Activated B cell treated with CpG ODN at 0.5 μM for 24 hours (primary cell): ENCODE measurements at regions of chr17 and their contacts with region 1.

Region 1: DNA sequence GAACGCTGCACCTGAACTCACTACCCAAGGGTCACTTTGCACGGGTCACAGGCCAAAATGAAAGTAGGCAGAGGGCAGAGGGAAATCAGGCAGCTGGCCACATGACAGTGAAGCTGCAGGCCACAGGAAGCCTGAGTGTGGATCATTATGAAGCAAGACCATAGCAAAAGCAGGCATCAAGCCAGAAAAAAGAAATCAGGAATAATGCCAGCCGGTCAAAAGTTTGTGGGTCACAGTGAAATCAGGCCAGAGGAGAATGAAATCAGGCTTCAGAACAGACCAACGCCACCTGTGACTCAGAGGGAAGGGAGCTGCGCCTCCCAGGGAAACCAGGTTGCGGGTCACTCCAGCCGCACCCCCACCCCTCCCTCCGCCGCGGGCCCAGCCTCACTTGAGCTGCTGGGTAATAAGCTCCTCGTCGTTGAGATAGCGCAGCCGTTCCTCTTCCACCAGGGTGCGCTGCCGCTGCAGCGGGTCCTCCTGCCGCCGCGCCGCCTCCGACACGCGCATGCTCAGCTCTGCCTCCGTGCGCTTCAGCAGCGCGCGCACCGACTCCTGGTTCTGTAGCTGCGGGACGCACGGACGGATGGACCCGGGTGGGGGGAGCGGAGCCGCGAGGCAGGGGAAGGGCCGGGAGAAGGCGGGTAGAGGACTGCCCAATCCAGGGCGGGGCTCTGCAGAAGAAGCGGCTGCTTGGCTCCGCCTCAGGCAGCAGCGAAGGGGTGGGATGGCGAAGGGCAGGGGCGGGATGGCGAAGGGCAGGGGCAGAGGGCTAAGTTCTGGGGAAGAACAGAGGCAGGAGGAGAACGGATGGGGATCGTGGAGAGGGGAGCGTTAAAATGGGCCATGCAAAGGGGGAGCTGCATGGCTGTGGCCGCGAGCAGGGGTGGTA is 47.7 kb downstream of the SRCIN1 start:
- DNase-seq: peak; percentile 86
- ATAC-seq: peak; percentile 80
- H3K4me3 Mint-ChIP-seq: peak overlapping the region; percentile 91
- H3K27ac Mint-ChIP-seq: peak overlapping the region; percentile 31
- H3K4me1 Mint-ChIP-seq: peaks cover 25% of the 10 kb centered on the region
- H3K27me3 Mint-ChIP-seq: peaks cover 18% of the 10 kb centered on the region
- CTCF ChIP-seq: no peak

Region 2: DNA sequence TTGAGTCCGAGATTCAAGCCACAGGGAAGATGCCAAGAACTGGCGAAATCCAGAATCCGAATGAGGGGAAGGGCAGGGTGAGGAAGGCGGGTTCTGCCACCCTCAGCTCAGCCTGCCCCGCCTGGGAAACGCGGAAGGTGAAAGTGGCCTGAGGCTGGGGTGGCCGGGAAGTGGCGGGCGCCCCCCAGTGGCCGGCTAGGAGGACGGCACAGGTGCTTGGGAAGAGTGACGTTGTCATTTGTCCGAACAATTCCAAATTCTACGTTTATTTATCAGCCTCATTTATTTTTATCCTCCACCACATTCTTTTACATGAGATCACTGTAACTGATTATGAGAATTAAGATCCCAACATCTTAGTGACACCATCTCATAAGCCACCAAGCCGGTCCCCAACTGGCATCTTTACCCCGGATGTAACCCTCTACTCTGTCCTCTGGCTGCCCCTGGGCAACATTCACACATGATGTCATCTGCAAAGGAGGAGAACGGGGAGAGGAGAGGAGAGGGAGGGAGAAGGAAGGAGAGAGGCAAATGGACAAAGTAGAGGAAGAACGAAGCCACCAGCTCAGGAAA is 26.4 kb after region 1 on chr17:
- CTCF ChIA-PET with region 1: interaction called, 72 read pairs
- POLR2A ChIA-PET with region 1: interaction called, 6 read pairs
- intact Hi-C with region 1: loop called (anchors 1 kb)
- DNase-seq: peak; percentile 57
- ATAC-seq: peak; percentile 92
- H3K4me3 Mint-ChIP-seq: no peak overlapping the region
- H3K27ac Mint-ChIP-seq: no peak overlapping the region
- H3K4me1 Mint-ChIP-seq: peaks cover 7% of the 10 kb centered on the region
- H3K27me3 Mint-ChIP-seq: peaks cover 62% of the 10 kb centered on the region
- CTCF ChIP-seq: peak; percentile 94

Region 3: GRCh38 chr17:38667099-38667786 is 109.2 kb after region 1 on chr17:
- CTCF ChIA-PET with region 1: interaction called, 83 read pairs
- POLR2A ChIA-PET with region 1: interaction called, 5 read pairs
- intact Hi-C with region 1: loop called (anchors 1 kb)
- DNase-seq: peak; percentile 39
- ATAC-seq: peak; percentile 87
- H3K4me3 Mint-ChIP-seq: no peak overlapping the region
- H3K27ac Mint-ChIP-seq: no peak overlapping the region
- H3K4me1 Mint-ChIP-seq: peaks cover 8% of the 10 kb centered on the region
- H3K27me3 Mint-ChIP-seq: peaks cover 57% of the 10 kb centered on the region
- CTCF ChIP-seq: peak; percentile 92

Region 4: GRCh38 chr17:38729886-38730525 is 171.9 kb after region 1 on chr17 and contains the start of gene CISD3:
- CTCF ChIA-PET with region 1: interaction called, 41 read pairs
- POLR2A ChIA-PET with region 1: interaction called, 9 read pairs
- intact Hi-C with region 1: loop called (anchors 1 kb)
- DNase-seq: peak; percentile 91
- ATAC-seq: peak; percentile 91
- H3K4me3 Mint-ChIP-seq: peak within 1 kb of the TSS; percentile 82
- H3K27ac Mint-ChIP-seq: peak within 1 kb of the TSS; percentile 79
- H3K4me1 Mint-ChIP-seq: peaks cover 58% of the 10 kb centered on the region
- H3K27me3 Mint-ChIP-seq: no peaks in the 10 kb centered on the region
- CTCF ChIP-seq: no peak
- total RNA-seq, gene CISD3: 11.2 and 12.1 TPM in 2 replicates